CD8-positive, alpha-beta T cell (primary cell): ENCODE measurements at regions of chr12 and their contacts with region 1.

Region 1: DNA sequence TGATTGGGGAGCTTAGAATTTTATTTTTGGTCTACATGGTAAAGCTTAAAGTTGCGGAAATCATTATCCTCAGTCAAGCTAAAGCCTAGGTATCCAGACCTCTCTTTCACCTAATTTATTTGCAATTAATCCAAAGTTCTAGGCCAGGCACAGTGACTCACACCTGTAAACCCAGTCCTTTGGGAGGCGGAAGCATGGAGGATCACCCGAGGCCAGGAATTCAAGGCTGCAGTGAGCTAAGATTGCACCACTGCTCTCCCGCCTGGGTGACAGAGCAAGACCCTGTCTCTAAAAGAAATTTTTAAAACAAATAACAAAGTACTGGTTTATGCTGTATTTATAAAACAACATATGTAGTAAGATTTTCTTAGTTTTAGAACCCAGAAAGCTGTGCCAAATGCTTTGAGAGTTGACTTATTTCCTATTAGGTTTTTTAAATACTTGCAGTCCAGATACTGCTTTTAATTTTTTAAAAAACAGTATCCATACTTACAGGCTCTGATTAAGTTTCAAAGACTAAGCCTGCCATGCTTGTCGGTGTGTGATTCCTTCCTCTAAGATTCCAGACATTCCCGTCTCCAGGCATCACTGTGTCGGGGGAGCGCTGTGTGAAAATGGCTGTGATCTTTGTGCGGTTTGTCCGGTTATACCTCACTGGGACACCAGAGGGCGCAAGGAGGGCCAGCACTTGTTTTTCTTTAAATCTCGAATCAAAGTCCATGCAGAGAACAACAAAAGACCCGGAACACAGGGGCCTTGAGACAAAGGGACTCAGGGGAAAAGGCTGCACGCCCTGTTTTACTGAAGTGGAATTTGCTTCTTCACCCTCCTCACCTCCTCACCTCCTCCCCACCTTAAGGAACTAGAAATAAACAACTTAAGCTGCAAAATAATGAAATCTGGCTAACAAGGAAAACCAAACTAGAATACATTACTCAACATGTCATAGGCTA is 24.6 kb upstream of the TMPO start:
- DNase-seq: peak; percentile 60 to 90 (median 86)
- ATAC-seq: peak; percentile 99
- H3K4me3 ChIP-seq: no peak overlapping the region
- H3K4me3 Mint-ChIP-seq: peak overlapping the region; percentile 65
- H3K27ac ChIP-seq: peak overlapping the region in 1 of 2 experiments; percentile 51
- H3K27ac Mint-ChIP-seq: peak overlapping the region; percentile 93
- H3K4me1 ChIP-seq: peaks cover 8% of the 10 kb centered on the region
- H3K4me1 Mint-ChIP-seq: peaks cover 7% of the 10 kb centered on the region
- H3K27me3 ChIP-seq: no peaks in the 10 kb centered on the region
- H3K27me3 Mint-ChIP-seq: no peaks in the 10 kb centered on the region
- CTCF ChIP-seq: peak; percentile 84

Region 2: DNA sequence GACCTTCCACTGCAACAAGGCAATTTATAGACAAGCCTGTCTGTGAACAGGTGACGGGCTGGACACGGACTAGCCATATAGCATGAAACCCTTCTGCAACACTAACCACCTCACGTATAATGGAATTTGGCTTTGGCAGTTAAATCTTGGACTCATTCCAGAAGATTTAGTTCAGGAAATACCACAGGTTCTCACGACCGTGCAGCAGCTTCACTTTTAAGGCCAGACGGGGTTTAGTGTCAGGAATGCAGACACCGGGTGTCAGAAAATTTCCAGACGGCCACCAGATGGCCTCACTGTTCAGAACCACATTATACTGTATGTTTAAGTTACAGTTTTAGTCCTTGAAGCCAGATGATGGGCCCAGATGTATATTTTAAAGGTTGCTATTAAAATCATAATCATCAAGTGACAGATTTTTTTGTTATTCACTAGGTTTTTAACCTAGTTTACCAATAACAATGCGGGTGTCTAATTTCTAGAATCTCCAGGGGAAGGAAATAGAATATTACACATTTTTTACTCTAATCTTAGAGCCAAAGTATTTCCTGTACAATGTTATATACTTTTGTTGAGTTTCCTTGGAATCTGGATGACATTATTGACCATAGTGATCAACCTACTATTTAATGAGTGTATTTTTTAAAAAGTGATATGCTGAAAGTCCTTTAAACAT is 65.9 kb before region 1 on chr12:
- CTCF ChIA-PET with region 1: interaction called, 7 read pairs
- POLR2A ChIA-PET with region 1: no interaction called
- intact Hi-C with region 1: loop called (anchors 2 kb)
- DNase-seq: peak in 8 of 9 experiments; percentile 7 to 65 (median 44)
- ATAC-seq: peak; percentile 73
- H3K4me3 ChIP-seq: no peak overlapping the region
- H3K4me3 Mint-ChIP-seq: no peak overlapping the region
- H3K27ac ChIP-seq: no peak overlapping the region
- H3K27ac Mint-ChIP-seq: no peak overlapping the region
- H3K4me1 ChIP-seq: no peaks in the 10 kb centered on the region
- H3K4me1 Mint-ChIP-seq: no peaks in the 10 kb centered on the region
- H3K27me3 ChIP-seq: no peaks in the 10 kb centered on the region
- H3K27me3 Mint-ChIP-seq: peaks cover 2% of the 10 kb centered on the region
- CTCF ChIP-seq: peak; percentile 68

Region 3: DNA sequence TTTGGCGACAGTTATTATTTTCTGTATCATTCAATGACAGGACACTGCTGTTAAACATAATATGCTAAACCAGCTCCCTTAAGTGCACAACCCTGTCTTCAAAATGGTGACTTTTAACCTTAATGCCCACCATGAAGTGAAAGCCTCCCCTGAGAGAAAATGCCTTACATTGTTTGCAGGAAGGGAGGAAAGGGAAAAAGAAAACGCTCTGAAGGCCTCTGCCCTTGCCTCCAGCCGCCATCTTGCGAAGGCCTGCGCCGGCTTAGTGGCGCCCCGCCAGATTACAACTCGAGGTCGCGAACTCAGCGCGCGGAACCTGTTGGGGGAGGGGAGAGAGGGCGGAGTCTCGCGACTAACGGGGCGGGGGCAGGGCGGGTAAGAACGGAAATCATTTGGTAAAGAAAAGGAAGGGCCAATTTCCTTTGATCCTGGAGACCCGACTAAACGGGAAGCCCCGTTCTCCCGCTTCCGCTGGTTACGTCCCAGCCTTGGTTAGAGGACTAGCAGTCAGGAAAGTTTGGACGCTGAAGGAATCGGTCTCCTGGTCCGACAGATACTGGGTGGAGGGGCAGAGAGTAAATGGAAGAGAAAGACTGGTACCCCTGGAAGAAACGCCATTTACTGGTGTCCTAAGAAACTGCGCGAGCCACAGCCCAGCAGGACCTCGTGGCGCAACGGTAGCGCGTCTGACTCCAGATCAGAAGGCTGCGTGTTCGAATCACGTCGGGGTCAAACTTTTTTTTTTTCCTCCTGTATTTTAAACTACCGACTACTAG is 13.0 kb after region 1 on chr12:
- CTCF ChIA-PET with region 1: interaction called, 18 read pairs
- POLR2A ChIA-PET with region 1: interaction called, 7 read pairs
- intact Hi-C with region 1: loop called (anchors 1 kb)
- DNase-seq: peak; percentile 89 to 97 (median 94)
- ATAC-seq: peak; percentile 89
- H3K4me3 ChIP-seq: peak overlapping the region; percentile 89 to 96
- H3K4me3 Mint-ChIP-seq: peak overlapping the region; percentile 99
- H3K27ac ChIP-seq: peak overlapping the region; percentile 91 to 99
- H3K27ac Mint-ChIP-seq: peak overlapping the region; percentile 99
- H3K4me1 ChIP-seq: peaks cover 3% of the 10 kb centered on the region
- H3K4me1 Mint-ChIP-seq: peaks cover 20% of the 10 kb centered on the region
- H3K27me3 ChIP-seq: no peaks in the 10 kb centered on the region
- H3K27me3 Mint-ChIP-seq: no peaks in the 10 kb centered on the region
- CTCF ChIP-seq: no peak

Region 4: DNA sequence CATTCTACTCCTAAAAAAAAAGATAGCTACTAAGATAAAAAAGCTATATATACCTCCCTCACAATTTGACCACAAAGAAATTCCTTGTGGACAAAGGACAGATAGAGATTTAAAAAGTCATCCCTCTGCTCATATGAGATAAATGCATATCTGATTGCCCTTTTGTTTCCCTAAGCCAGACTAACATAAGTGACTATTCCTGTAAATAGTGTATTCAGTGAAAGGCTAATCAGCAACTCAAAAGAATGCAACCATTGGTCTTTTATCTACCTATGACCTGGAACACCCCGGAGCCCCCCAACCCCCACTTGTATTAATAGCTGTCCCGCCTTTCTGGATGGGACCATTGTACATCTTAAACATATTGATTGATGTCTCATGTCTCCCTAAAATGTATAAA is 18.3 kb after region 1 on chr12:
- CTCF ChIA-PET with region 1: interaction called, 120 read pairs
- POLR2A ChIA-PET with region 1: interaction called, 68 read pairs
- intact Hi-C with region 1: no loop called
- DNase-seq: no peak
- ATAC-seq: no peak
- H3K4me3 ChIP-seq: no peak overlapping the region
- H3K4me3 Mint-ChIP-seq: no peak overlapping the region
- H3K27ac ChIP-seq: no peak overlapping the region
- H3K27ac Mint-ChIP-seq: no peak overlapping the region
- H3K4me1 ChIP-seq: peaks cover 15% of the 10 kb centered on the region
- H3K4me1 Mint-ChIP-seq: peaks cover 29% of the 10 kb centered on the region
- H3K27me3 ChIP-seq: no peaks in the 10 kb centered on the region
- H3K27me3 Mint-ChIP-seq: no peaks in the 10 kb centered on the region
- CTCF ChIP-seq: no peak

Region 5: GRCh38 chr12:98532681-98533304 is 42.0 kb after region 1 on chr12:
- CTCF ChIA-PET with region 1: interaction called, 11 read pairs
- POLR2A ChIA-PET with region 1: no interaction called
- intact Hi-C with region 1: loop called (anchors 1 to 5 kb)
- DNase-seq: peak in 3 of 9 experiments; percentile 12 to 67 (median 54)
- ATAC-seq: peak; percentile 40
- H3K4me3 ChIP-seq: no peak overlapping the region
- H3K4me3 Mint-ChIP-seq: no peak overlapping the region
- H3K27ac ChIP-seq: no peak overlapping the region
- H3K27ac Mint-ChIP-seq: peak overlapping the region; percentile 41
- H3K4me1 ChIP-seq: no peaks in the 10 kb centered on the region
- H3K4me1 Mint-ChIP-seq: peaks cover 13% of the 10 kb centered on the region
- H3K27me3 ChIP-seq: no peaks in the 10 kb centered on the region
- H3K27me3 Mint-ChIP-seq: no peaks in the 10 kb centered on the region
- CTCF ChIP-seq: peak; percentile 59

Region 6: DNA sequence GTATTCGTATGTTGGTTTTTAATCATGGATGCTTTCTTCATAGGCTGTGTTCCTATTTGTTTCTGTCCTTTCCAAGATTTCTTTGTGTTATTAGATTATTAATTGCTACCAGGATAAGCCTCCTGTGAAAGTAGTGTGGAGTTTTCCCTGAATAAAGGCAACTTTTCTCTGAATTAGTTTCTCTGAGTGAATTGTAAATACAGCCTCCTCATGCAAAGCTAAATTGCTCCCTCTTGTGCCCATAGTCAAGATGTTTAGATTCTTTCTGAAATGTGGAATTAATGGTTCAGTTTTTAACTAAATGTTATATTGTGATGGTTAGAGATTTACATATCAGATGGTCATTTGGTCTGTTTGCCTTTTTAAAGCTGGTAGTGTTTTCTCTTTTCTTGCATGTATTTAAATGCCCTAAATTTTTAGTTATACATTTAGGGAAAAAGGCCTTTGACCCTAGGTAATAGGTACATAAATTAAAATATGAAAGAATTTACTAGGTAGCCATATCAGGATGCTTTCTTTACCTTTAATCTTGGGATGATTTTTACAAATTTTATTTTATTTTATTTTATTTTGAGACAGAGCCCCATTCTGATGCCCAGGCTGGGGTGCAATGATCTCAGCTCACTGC is 163.2 kb after region 1 on chr12:
- CTCF ChIA-PET with region 1: interaction called, 8 read pairs
- POLR2A ChIA-PET with region 1: no interaction called
- intact Hi-C with region 1: loop called in 1 of 2 experiments (anchors 1 kb)
- DNase-seq: peak in 2 of 9 experiments; percentile 65 to 76
- ATAC-seq: peak; percentile 57
- H3K4me3 ChIP-seq: no peak overlapping the region
- H3K4me3 Mint-ChIP-seq: no peak overlapping the region
- H3K27ac ChIP-seq: no peak overlapping the region
- H3K27ac Mint-ChIP-seq: no peak overlapping the region
- H3K4me1 ChIP-seq: no peaks in the 10 kb centered on the region
- H3K4me1 Mint-ChIP-seq: peaks cover 9% of the 10 kb centered on the region
- H3K27me3 ChIP-seq: no peaks in the 10 kb centered on the region
- H3K27me3 Mint-ChIP-seq: no peaks in the 10 kb centered on the region
- CTCF ChIP-seq: peak; percentile 84

Region 7: GRCh38 chr12:98894412-98895085 is 403.8 kb after region 1 on chr12:
- CTCF ChIA-PET with region 1: no interaction called
- POLR2A ChIA-PET with region 1: no interaction called
- intact Hi-C with region 1: no loop called
- DNase-seq: no peak
- ATAC-seq: no peak
- H3K4me3 ChIP-seq: no peak overlapping the region
- H3K4me3 Mint-ChIP-seq: no peak overlapping the region
- H3K27ac ChIP-seq: no peak overlapping the region
- H3K27ac Mint-ChIP-seq: no peak overlapping the region
- H3K4me1 ChIP-seq: no peaks in the 10 kb centered on the region
- H3K4me1 Mint-ChIP-seq: no peaks in the 10 kb centered on the region
- H3K27me3 ChIP-seq: peaks cover 0 to 4% of the 10 kb centered on the region in 2 experiments
- H3K27me3 Mint-ChIP-seq: peaks cover 56% of the 10 kb centered on the region
- CTCF ChIP-seq: no peak

Region 8: DNA sequence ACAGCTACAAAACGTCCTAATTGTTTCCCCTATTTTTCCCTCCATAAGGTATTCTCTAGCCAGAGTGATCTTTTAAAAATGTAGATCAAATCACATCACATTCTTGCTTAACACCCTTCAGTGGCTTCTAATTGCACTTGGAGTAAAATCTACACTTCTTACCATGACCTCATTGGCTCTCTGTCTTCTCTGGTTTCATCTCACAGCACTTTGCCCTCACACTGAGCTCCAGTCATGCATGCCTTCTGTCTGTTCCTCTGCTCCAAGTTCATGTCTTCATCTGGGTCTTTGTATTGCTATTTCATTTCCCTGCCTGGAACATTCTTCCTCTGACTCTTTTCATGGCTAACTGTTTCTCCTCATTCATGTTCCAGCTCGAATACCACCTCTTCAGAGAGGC is 936.3 kb after region 1 on chr12:
- CTCF ChIA-PET with region 1: no interaction called
- POLR2A ChIA-PET with region 1: no interaction called
- intact Hi-C with region 1: no loop called
- DNase-seq: no peak
- ATAC-seq: no peak
- H3K4me3 ChIP-seq: no peak overlapping the region
- H3K4me3 Mint-ChIP-seq: no peak overlapping the region
- H3K27ac ChIP-seq: no peak overlapping the region
- H3K27ac Mint-ChIP-seq: no peak overlapping the region
- H3K4me1 ChIP-seq: no peaks in the 10 kb centered on the region
- H3K4me1 Mint-ChIP-seq: no peaks in the 10 kb centered on the region
- H3K27me3 ChIP-seq: no peaks in the 10 kb centered on the region
- H3K27me3 Mint-ChIP-seq: no peaks in the 10 kb centered on the region
- CTCF ChIP-seq: no peak